A673 (cell line): ENCODE measurements at regions of chr1 and their contacts with region 1.

Region 1: GRCh38 chr1:224922404-224923164 is 6.9 kb upstream of the DNAH14 start:
- DNase-seq: peak; percentile 47
- H3K4me3 ChIP-seq: no peak overlapping the region
- H3K27ac ChIP-seq: no peak overlapping the region
- H3K4me1 ChIP-seq: no peaks in the 10 kb centered on the region
- H3K27me3 ChIP-seq: no peaks in the 10 kb centered on the region
- CTCF ChIP-seq: peak; percentile 71

Region 2: GRCh38 chr1:223695941-223696340 is 1226.6 kb before region 1 on chr1:
- CTCF ChIA-PET with region 1: no interaction called
- POLR2A ChIA-PET with region 1: no interaction called
- intact Hi-C with region 1: loop called (anchors 5 kb)
- DNase-seq: no peak
- H3K4me3 ChIP-seq: no peak overlapping the region
- H3K27ac ChIP-seq: no peak overlapping the region
- H3K4me1 ChIP-seq: peaks cover 4% of the 10 kb centered on the region
- H3K27me3 ChIP-seq: no peaks in the 10 kb centered on the region
- CTCF ChIP-seq: no peak

Region 3: GRCh38 chr1:224411766-224412165 is 510.8 kb before region 1 on chr1:
- CTCF ChIA-PET with region 1: no interaction called
- POLR2A ChIA-PET with region 1: no interaction called
- intact Hi-C with region 1: no loop called
- DNase-seq: no peak
- H3K4me3 ChIP-seq: no peak overlapping the region
- H3K27ac ChIP-seq: no peak overlapping the region
- H3K4me1 ChIP-seq: no peaks in the 10 kb centered on the region
- H3K27me3 ChIP-seq: no peaks in the 10 kb centered on the region
- CTCF ChIP-seq: no peak

Region 4: DNA sequence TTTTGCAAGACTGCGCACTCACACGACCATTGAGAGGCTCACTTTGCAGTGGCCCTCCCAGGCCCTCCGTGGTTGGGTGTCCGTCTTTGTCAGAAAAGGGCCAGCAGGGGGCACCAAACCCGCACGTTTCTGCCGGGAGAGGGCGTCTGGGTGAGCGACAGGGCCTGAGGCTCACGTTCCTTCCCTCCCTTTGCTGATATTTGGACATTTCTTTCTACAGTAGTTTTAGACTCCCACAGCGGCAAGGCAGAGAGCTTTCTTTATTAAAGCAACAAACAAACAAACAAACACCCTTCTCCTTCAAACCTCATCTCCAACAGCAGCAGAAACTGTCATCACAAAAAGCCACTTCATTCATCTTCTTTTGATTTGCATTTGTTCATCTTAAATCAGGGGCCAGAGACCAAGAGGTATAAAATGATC is 408.8 kb before region 1 on chr1:
- CTCF ChIA-PET with region 1: interaction called, 4 read pairs
- POLR2A ChIA-PET with region 1: no interaction called
- intact Hi-C with region 1: loop called (anchors 2 kb)
- DNase-seq: peak; percentile 91
- H3K4me3 ChIP-seq: no peak overlapping the region
- H3K27ac ChIP-seq: no peak overlapping the region
- H3K4me1 ChIP-seq: no peaks in the 10 kb centered on the region
- H3K27me3 ChIP-seq: no peaks in the 10 kb centered on the region
- CTCF ChIP-seq: peak; percentile 95

Region 5: GRCh38 chr1:226062558-226063223 is 1140.1 kb after region 1 on chr1 and contains the start of gene H3-3A:
- CTCF ChIA-PET with region 1: no interaction called
- POLR2A ChIA-PET with region 1: no interaction called
- intact Hi-C with region 1: no loop called
- DNase-seq: peak; percentile 97
- H3K4me3 ChIP-seq: peak within 1 kb of the TSS; percentile 76
- H3K27ac ChIP-seq: peak within 1 kb of the TSS; percentile 99
- H3K4me1 ChIP-seq: peaks cover 21% of the 10 kb centered on the region
- H3K27me3 ChIP-seq: no peaks in the 10 kb centered on the region
- CTCF ChIP-seq: 0 out of 2 replicates have a peak, but pooled peaks have one; percentile 18
- total RNA-seq, gene H3-3A: 638 and 640 TPM in 2 replicates